Psoas muscle (tissue), 8 donors: ENCODE measurements at regions of chr4 and their contacts with region 1.

Region 1: DNA sequence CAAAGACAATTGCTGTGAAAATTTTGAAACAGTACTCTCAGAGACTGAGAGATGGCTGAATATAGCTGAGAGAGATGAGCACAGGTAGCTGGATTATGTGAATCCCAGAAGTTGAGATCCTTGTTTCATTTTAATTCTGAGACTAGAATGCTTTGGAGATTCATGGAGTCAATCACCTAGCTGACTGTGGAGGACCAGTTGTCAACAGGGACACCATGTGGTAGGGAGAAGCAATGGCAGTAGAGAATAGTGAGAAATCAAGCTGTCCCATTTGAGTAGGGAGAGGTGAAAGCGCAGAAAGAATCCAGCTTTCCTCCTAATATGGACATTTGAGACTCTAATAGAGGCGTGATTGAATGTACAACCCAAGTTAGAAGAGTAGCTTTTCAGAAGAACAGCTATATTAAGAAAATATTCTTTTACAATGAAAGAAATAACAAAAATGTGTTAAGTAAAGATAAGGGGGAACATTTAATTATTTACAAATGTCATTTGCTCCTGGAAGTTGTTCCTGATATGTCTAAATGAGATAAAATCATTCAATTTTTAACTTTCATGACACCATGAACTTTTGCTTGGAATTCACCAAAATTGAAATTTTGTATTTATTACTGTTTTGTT is 30.3 kb upstream of the GLRB start:
- DNase-seq: no peak
- ATAC-seq: peak; percentile 80 to 90 (median 84)
- H3K4me3 ChIP-seq: no peak overlapping the region
- H3K27ac ChIP-seq: no peak overlapping the region
- H3K4me1 ChIP-seq: no peaks in the 10 kb centered on the region
- H3K27me3 ChIP-seq: no peaks in the 10 kb centered on the region
- CTCF ChIP-seq: peak; percentile 77

Region 2: DNA sequence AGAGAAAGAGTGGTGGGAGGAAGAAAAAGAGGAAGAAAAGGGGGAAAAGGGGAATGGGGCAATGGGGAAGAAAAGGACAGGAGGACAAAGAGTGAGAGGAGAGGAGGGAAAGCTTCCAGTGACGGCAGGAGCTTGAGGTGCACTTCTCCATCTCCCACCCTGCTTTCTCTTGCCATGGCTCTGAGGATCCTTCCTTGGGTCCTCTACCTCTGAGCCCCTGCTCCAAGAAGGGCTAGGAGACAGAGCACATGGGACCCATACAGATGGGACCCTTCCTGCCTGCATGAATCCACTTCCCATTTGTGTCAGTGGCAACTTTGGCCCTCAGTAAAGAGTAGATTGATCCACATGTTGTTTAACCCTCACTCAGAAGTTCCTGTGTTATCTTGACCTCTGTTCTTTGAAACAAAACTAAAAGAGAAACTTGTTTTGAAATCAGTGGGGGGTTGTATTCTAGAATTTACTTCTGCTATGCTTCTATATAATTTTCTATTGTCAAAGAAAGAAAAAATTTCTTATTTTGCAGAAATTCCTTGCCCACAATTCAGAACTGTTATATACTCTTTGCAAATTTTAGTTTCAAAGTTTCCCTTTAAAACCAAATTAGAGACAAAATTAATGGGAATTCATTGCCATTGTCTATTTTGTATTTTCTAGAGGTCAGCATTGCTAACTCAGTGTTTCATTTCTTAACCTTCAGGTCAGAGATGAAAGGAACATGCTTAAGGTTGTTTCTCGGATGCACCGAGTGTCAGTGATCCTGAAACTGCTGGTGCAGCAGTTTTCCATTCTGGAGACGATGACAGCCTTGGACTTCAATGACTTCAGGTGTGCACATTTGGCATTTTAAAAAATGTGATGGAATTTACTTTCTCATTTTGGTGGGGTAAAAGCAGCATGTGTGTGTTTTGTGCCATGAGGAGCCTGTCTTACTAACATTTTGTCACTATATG is 1137.2 kb before region 1 on chr4:
- intact Hi-C with region 1: no loop called
- DNase-seq: no peak
- ATAC-seq: no peak
- H3K4me3 ChIP-seq: no peak overlapping the region
- H3K27ac ChIP-seq: no peak overlapping the region
- H3K4me1 ChIP-seq: no peaks in the 10 kb centered on the region
- H3K27me3 ChIP-seq: no peaks in the 10 kb centered on the region
- CTCF ChIP-seq: no peak

Region 3: DNA sequence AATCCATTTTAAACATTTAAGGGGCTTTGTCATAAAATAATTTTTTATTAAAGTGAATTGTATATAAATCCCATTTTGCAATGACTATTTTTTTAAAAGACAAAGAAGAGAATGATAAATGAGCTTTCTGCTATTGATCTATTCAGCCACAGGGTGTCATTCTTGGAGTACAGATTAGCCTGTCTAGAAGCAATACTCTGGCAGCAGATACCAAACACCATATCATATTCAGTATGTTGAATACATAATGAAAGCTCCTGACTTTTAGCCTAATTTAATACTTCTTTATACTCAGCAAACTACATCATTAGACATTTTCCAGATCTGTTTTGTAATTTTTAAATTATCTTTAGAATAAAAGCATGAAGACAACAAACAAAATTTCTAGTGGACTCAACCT is 570.3 kb before region 1 on chr4:
- intact Hi-C with region 1: loop called (anchors 2 to 5 kb)
- DNase-seq: no peak
- ATAC-seq: peak; percentile 66 to 88 (median 74)
- H3K4me3 ChIP-seq: no peak overlapping the region
- H3K27ac ChIP-seq: no peak overlapping the region
- H3K4me1 ChIP-seq: no peaks in the 10 kb centered on the region
- H3K27me3 ChIP-seq: no peaks in the 10 kb centered on the region
- CTCF ChIP-seq: peak; percentile 62

Region 4: DNA sequence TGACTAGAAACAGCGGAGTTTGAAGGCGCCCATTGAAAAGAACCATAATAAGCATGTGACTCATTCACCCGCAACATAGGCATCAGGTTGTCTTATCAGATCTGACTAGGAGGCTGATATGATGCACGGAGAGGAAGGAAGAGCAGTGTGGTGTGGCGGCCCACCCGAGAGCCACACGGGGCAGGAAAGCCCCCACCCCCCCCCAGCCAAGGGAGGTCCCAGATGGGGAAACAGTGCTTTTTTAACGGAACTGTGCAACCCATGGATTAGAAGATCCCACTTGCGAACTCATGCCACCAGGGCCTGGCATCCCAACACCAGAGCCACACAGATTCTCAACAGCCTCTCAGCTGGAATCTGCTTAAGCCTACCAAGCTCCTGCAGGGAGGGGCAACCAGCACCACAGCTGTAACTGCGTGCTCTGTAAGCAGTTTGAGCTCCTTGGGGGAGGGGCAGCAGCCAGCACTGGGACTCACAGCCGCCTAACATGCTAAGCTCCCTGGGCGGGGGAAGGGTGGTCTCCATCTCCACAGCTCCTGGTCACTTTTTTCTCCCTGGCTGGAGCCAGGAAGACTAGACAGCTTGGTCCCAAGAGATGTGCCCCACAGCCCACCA is 540.2 kb before region 1 on chr4:
- intact Hi-C with region 1: no loop called
- DNase-seq: no peak
- ATAC-seq: no peak
- H3K4me3 ChIP-seq: no peak overlapping the region
- H3K27ac ChIP-seq: no peak overlapping the region
- H3K4me1 ChIP-seq: no peaks in the 10 kb centered on the region
- H3K27me3 ChIP-seq: no peaks in the 10 kb centered on the region
- CTCF ChIP-seq: no peak

Region 5: GRCh38 chr4:156594624-156595023 is 451.0 kb before region 1 on chr4:
- intact Hi-C with region 1: loop called (anchors 10 kb)
- DNase-seq: peak; percentile 34 to 47
- ATAC-seq: no peak
- H3K4me3 ChIP-seq: no peak overlapping the region
- H3K27ac ChIP-seq: no peak overlapping the region
- H3K4me1 ChIP-seq: peaks cover 3% of the 10 kb centered on the region
- H3K27me3 ChIP-seq: no peaks in the 10 kb centered on the region
- CTCF ChIP-seq: no peak

Region 6: GRCh38 chr4:156615066-156615531 is 430.5 kb before region 1 on chr4:
- intact Hi-C with region 1: no loop called
- DNase-seq: no peak
- ATAC-seq: no peak
- H3K4me3 ChIP-seq: no peak overlapping the region
- H3K27ac ChIP-seq: no peak overlapping the region
- H3K4me1 ChIP-seq: no peaks in the 10 kb centered on the region
- H3K27me3 ChIP-seq: no peaks in the 10 kb centered on the region
- CTCF ChIP-seq: no peak

Region 7: GRCh38 chr4:156695163-156695562 is 350.5 kb before region 1 on chr4:
- intact Hi-C with region 1: loop called in 1 of 2 experiments (anchors 10 kb)
- DNase-seq: no peak
- ATAC-seq: no peak
- H3K4me3 ChIP-seq: no peak overlapping the region
- H3K27ac ChIP-seq: no peak overlapping the region
- H3K4me1 ChIP-seq: no peaks in the 10 kb centered on the region
- H3K27me3 ChIP-seq: no peaks in the 10 kb centered on the region
- CTCF ChIP-seq: no peak

Region 8: GRCh38 chr4:156983366-156983765 is 62.3 kb before region 1 on chr4:
- intact Hi-C with region 1: no loop called
- DNase-seq: no peak
- ATAC-seq: no peak
- H3K4me3 ChIP-seq: no peak overlapping the region
- H3K27ac ChIP-seq: no peak overlapping the region
- H3K4me1 ChIP-seq: no peaks in the 10 kb centered on the region
- H3K27me3 ChIP-seq: no peaks in the 10 kb centered on the region
- CTCF ChIP-seq: peak; percentile 27